HEK293 (cell line): ENCODE measurements at regions of chr3 and their contacts with region 1.

Region 1: DNA sequence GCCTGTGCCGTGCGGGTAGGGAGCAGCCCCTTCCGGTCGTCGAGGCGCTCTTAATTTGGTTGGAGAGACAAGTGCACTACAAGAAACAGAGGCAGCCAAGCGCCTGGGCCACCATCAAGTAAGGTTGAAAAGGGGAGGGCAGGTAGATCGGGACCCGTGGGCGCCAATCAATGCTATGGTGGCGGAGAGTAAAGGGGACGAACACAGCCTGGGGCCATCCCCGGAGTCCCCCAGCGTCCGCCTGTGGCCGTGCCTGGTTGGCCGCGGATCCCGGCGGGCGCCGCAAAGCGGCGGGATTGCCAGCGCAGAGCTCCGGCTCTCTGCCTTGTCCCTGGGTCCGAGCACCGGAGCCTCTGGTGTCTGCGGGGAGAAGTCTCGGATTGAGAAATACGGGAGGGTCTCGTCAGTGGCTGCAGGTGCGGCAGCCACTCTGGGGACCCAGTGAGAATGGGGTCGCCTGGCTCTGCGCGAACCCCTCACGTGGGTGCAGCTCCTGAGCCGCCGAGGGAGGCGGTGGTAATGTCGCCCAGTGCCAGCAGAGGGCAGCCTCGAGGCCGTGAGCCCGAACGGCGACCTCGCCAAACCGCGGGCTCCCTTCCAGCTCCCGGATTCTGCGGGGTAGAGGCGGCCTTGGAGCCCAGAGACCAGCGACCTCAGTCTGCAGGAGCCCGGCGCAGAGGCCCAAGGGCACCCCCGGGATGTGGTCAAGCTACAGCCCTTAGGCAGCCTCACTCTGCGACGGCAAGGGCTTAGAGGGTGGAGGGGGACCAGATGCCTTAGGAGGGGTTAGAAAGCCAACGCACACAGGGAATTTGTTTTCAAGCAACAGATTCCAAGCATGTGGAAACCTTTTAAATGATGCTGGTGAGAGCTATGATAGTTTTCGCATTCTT is 10.8 kb downstream of the FOXL2 start:
- H3K4me3 ChIP-seq: peak overlapping the region; percentile 49
- H3K27ac ChIP-seq: no peak overlapping the region
- H3K4me1 ChIP-seq: no peaks in the 10 kb centered on the region
- CTCF ChIP-seq: peak; percentile 88

Region 2: GRCh38 chr3:138946181-138947059 is 10.3 kb after region 1 on chr3:
- CTCF ChIA-PET with region 1: interaction called, 10 read pairs
- POLR2A ChIA-PET with region 1: no interaction called
- H3K4me3 ChIP-seq: peak overlapping the region; percentile 21
- H3K27ac ChIP-seq: no peak overlapping the region
- H3K4me1 ChIP-seq: no peaks in the 10 kb centered on the region
- CTCF ChIP-seq: no peak

Region 3: DNA sequence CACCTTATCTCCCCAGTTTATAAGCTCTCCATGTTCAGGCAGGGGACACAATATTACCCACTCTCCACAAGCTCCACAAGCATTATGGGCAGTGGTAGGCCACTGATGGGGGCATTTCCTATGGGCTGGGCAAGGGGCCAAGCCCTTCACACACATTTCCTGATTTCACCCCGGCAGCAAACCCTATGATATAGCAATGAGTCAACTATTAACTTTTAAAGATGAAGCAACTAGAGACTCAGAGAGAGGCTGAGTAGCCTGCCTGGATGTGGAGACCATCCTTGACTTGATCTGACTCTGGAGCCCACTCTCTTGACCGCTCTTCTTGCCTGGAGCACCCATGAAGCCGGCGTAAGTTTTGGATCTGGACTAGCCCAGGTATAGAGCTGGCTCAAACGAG is 38.4 kb after region 1 on chr3:
- CTCF ChIA-PET with region 1: interaction called, 13 read pairs
- POLR2A ChIA-PET with region 1: interaction called, 3 read pairs
- H3K4me3 ChIP-seq: no peak overlapping the region
- H3K27ac ChIP-seq: no peak overlapping the region
- H3K4me1 ChIP-seq: no peaks in the 10 kb centered on the region
- CTCF ChIP-seq: no peak

Region 4: GRCh38 chr3:139088462-139089324 is 152.6 kb after region 1 on chr3:
- CTCF ChIA-PET with region 1: no interaction called
- POLR2A ChIA-PET with region 1: no interaction called
- H3K4me3 ChIP-seq: no peak overlapping the region
- H3K27ac ChIP-seq: no peak overlapping the region
- H3K4me1 ChIP-seq: no peaks in the 10 kb centered on the region
- CTCF ChIP-seq: no peak

Region 5: GRCh38 chr3:139302084-139302800 is 366.1 kb after region 1 on chr3:
- CTCF ChIA-PET with region 1: no interaction called
- POLR2A ChIA-PET with region 1: no interaction called
- H3K4me3 ChIP-seq: no peak overlapping the region
- H3K27ac ChIP-seq: no peak overlapping the region
- H3K4me1 ChIP-seq: no peaks in the 10 kb centered on the region
- CTCF ChIP-seq: no peak